Left cardiac atrium (tissue), 4 donors: ENCODE measurements at regions of chr15 and their contacts with region 1.

Region 1: DNA sequence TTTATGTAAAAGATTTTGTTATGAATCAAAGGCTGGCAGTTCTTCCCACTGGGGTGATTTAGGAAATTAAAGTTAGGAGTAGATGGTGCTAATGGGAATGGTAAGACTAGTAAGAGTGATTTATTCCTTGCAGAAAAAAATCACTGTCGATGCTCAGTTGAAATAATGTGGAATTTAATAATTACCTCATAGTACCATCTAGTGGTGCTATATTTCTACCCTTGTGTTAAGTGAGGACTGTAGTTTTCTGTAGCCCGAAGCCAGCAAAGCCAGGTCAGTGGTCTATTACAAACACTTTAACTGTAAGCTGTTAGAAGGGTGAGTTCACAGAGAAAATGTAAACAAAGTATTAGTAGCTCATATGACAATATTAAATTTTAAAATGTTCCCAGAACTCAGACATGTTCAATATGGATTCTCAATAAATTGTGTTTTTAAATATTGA is 39.5 kb upstream of the GOLGA8J start:
- DNase-seq: no peak
- ATAC-seq: peak in 1 of 2 donors; percentile 36

Region 2: DNA sequence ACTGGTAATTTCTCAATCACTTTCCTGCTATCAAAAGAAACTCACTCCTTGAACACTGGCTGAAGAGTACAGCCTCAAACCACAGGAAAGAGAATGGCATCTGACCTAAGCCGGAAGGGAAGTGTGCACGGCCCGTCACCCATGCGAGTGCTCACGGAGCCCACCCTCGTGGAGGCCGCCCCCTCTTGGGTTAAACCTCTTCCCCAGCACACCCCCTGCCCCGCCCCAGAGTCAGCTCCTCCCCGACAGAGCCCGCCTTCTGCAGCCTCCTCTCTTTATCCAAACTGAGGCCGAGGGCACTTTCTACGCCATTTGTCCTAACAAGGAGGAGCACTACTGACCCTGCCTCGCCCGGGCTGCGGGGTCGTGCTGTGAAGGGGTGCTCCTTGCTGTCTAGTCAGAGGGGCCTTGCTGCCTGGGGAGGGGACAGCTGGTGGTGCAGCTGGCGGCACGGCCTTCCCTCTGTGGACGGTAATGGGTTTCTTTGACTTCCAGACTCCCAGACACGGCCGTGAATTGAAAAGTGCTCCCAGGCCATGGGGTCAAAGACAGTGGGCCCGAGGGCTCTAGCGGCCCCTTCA is 911.3 kb before region 1 on chr15:
- intact Hi-C with region 1: no loop called
- DNase-seq: peak; percentile 15
- ATAC-seq: no peak

Region 3: GRCh38 chr15:29668120-29668602 is 375.1 kb before region 1 on chr15:
- intact Hi-C with region 1: loop called in 1 of 2 experiments (anchors 10 kb)
- DNase-seq: peak; percentile 72
- ATAC-seq: peak; percentile 73 to 90

Region 4: GRCh38 chr15:29942143-29942542 is 101.1 kb before region 1 on chr15:
- intact Hi-C with region 1: loop called (anchors 2 to 10 kb)
- DNase-seq: no peak
- ATAC-seq: peak; percentile 45 to 63

Region 5: DNA sequence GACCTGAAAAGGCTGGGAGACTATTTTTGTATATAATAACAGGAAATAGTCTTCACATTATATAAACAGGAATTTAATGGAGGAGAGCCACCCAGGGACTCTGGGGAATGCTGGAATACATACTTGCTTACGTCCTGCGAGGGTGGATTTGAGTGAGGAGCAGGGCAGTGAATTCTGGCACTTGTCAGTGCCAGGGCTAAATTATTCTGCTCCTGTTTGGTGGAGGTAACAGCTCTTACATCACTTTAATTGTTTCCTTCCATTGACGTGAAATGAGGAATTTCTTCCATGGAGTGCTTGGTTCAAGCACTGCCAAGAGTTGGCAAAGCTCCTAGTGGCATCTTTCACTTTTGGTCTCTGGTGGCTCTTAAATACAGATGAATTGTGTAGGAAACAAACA is 54.5 kb before region 1 on chr15:
- intact Hi-C with region 1: loop called in 1 of 2 experiments (anchors 5 kb)
- DNase-seq: no peak
- ATAC-seq: peak in 1 of 2 donors; percentile 46